ENCODE measurements at regions of chr17 and their contacts with region 1.

Region 1: DNA sequence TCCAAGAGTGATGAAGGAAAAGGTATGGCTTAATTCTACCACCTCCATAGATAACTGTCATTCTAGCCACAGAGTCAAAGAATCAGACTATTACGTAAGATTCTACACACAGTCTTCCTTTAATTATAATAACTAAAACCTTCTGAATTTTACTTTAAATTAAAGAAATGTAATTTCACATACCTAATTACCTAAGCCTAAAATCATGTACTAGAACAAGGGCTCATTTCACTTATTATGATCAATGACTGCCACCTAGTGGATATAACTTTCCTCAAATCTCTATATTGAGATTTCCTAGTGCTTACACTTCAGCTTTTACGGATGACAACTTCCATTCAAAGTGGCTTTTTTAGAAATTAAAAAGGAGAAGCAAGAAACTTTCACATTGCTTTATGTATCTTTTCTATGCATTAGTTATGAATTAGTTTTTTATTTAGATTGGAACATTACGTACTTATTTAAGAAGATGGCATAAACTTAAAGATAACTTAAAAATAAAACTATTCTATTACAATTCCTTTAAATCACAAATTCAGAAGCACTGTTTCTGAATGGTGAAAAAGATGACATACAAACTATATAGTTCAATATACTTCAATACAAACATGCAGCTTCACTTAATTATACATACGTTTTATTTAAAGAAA is 18.2 kb upstream of the ABCA10 start:
- DNase-seq: peak; percentile 81
- ATAC-seq: peak; percentile 70
- H3K4me3 ChIP-seq: no peak overlapping the region
- H3K27ac ChIP-seq: no peak overlapping the region
- H3K4me1 ChIP-seq: no peaks in the 10 kb centered on the region
- H3K27me3 ChIP-seq: no peaks in the 10 kb centered on the region
- CTCF ChIP-seq: peak; percentile 93

Region 2: GRCh38 chr17:68640242-68640989 is 606.4 kb before region 1 on chr17:
- CTCF ChIA-PET with region 1: no interaction called
- POLR2A ChIA-PET with region 1: no interaction called
- intact Hi-C with region 1: loop called (anchors 10 kb)
- DNase-seq: no peak
- ATAC-seq: no peak
- H3K4me3 ChIP-seq: no peak overlapping the region
- H3K27ac ChIP-seq: no peak overlapping the region
- H3K4me1 ChIP-seq: no peaks in the 10 kb centered on the region
- H3K27me3 ChIP-seq: peaks cover 3% of the 10 kb centered on the region; the same call in 1 of the 2 replicates
- CTCF ChIP-seq: no peak

Measured in PC-3 (cell line).